ENCODE measurements at regions of chr15 and their contacts with region 1.

Region 1: GRCh38 chr15:85766001-85766831 is 28.5 kb downstream of the KLHL25 start:
- DNase-seq: peak; percentile 31
- ATAC-seq: peak; percentile 66
- H3K4me3 Mint-ChIP-seq: no peak overlapping the region
- H3K27ac Mint-ChIP-seq: peak overlapping the region; percentile 68
- H3K4me1 Mint-ChIP-seq: peaks cover 27% of the 10 kb centered on the region
- H3K27me3 Mint-ChIP-seq: no peaks in the 10 kb centered on the region
- CTCF ChIP-seq: no peak

Region 2: DNA sequence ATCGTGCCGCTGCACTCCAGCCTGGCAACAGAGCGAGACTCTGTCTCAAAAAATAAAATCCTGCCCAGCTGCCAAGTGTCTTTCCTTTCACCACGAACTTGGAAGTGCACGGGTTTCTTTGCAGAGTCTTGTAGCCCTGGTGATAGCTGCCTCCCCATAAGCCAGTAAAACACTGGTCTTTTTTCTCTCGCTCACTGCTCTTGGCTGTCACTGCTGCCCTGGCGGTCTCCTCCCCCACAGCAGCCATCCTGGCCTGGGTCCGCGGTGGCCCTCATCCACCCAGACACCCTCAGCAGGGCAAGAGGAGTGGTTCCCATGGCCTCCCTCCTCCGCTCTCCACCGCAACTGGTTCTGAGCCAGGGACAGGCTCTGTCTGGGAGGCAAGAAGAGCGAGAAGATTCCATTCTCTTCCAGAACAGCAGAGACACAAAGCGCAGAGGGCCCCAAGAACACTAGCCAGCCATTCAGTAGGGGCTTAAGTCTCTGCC is 15.9 kb before region 1 on chr15:
- CTCF ChIA-PET with region 1: interaction called, 10 read pairs
- POLR2A ChIA-PET with region 1: interaction called, 3 read pairs
- DNase-seq: no peak
- ATAC-seq: peak; percentile 1; the same call in 1 of the 2 replicates
- H3K4me3 Mint-ChIP-seq: peak overlapping the region; percentile 26
- H3K27ac Mint-ChIP-seq: peak overlapping the region; percentile 79
- H3K4me1 Mint-ChIP-seq: peaks cover 74% of the 10 kb centered on the region
- H3K27me3 Mint-ChIP-seq: no peaks in the 10 kb centered on the region
- CTCF ChIP-seq: no peak